Kidney (tissue), 22 donors: ENCODE measurements at regions of chr1 and their contacts with region 1.

Region 1: DNA sequence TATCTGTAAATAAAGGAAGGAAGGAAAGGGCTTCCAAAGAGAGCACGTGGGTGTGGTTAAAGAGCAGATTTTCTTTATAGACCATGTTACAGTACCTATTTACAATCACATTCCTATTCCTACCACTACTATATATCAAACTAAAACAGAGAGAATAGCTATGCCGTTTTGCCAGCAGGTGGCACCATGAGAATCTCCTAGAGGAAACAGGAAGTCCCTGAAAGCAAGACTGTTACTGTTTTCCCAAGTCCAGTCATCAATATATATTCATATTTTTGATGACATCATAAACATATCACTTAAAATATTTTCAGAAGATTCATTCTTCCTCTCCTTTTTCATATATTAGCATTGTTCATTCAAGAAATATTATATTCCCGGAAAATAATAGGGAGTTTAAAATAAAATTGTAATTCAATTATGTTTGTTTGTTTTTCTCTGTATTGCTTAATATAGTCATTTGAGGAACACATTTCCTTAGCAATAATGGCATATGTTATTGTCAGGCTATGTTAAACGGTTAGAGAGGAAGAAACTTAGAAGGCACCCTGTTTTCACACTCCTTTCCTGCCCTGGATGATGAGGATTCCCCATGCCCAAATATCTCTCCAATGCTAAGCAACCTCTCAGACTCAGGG is 6.6 kb downstream of the CCDC190 start:
- DNase-seq: peak in 4 of 5 donors; percentile 50 to 80 (median 56)
- H3K4me3 ChIP-seq: no peak overlapping the region
- H3K27ac ChIP-seq: no peak overlapping the region
- H3K4me1 ChIP-seq: no peaks in the 10 kb centered on the region
- H3K27me3 ChIP-seq: no peaks in the 10 kb centered on the region
- CTCF ChIP-seq: peak; percentile 69

Region 2: GRCh38 chr1:163315773-163316374 is 461.5 kb after region 1 on chr1:
- intact Hi-C with region 1: loop called (anchors 10 kb)
- DNase-seq: peak in 3 of 5 donors; percentile 23 to 65 (median 59)
- H3K4me3 ChIP-seq: no peak overlapping the region
- H3K27ac ChIP-seq: no peak overlapping the region
- H3K4me1 ChIP-seq: no peaks in the 10 kb centered on the region
- H3K27me3 ChIP-seq: no peaks in the 10 kb centered on the region
- CTCF ChIP-seq: peak; percentile 60